Ovary (tissue), 10 donors: ENCODE measurements at regions of chr19 and their contacts with region 1.

Region 1: GRCh38 chr19:56973713-56974555 is 133.4 kb upstream of the PEG3 start:
- DNase-seq: peak; percentile 82 to 89 (median 86)
- H3K4me3 ChIP-seq: no peak overlapping the region
- H3K27ac ChIP-seq: peak overlapping the region in 1 of 2 donors; percentile 96
- H3K4me1 ChIP-seq: peaks cover 50% of the 10 kb centered on the region
- H3K27me3 ChIP-seq: no peaks in the 10 kb centered on the region
- CTCF ChIP-seq: no peak
- EP300 ChIP-seq: no peak
- POLR2A ChIP-seq: no peak

Region 2: GRCh38 chr19:56838909-56839651 is 134.9 kb before region 1 on chr19:
- intact Hi-C with region 1: loop called in 1 of 4 experiments (anchors 10 kb)
- DNase-seq: peak; percentile 91 to 99 (median 95)
- H3K4me3 ChIP-seq: peak overlapping the region; percentile 56
- H3K27ac ChIP-seq: peak overlapping the region in 1 of 2 donors; percentile 90
- H3K4me1 ChIP-seq: peaks cover 2% of the 10 kb centered on the region
- H3K27me3 ChIP-seq: no peaks in the 10 kb centered on the region
- CTCF ChIP-seq: no peak
- EP300 ChIP-seq: no peak
- POLR2A ChIP-seq: no peak

Region 3: DNA sequence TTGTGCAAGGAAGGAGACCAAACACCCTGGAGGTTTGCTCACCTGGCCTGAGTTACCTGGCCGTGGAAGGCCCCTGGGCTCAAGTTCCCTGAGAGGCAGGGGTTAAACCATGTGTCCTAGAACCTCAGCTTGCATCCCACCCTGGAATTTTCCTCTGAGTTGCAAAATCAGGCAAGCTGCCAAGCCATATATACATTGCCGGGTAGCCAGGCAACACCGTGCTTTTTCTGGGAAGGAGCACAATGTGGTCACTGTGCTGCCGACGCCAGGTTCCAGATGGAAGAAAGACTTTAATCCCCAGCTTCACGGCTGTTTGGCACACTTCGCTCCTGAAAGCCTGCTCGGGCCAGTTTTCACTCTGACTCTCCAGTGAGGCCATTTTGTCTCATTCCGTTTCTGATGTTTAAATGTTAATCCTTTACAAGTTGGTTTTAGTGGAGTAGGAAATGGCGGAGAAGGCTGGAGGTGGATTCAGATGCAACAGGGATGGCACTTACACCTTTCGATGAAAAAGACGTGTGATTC is 73.3 kb before region 1 on chr19:
- intact Hi-C with region 1: no loop called
- DNase-seq: no peak
- H3K4me3 ChIP-seq: no peak overlapping the region
- H3K27ac ChIP-seq: no peak overlapping the region
- H3K4me1 ChIP-seq: peaks cover 1% of the 10 kb centered on the region
- H3K27me3 ChIP-seq: no peaks in the 10 kb centered on the region
- CTCF ChIP-seq: no peak
- EP300 ChIP-seq: no peak
- POLR2A ChIP-seq: no peak

Region 4: GRCh38 chr19:57057036-57057686 is 83.2 kb after region 1 on chr19:
- intact Hi-C with region 1: loop called in 2 of 4 experiments (anchors 10 kb)
- DNase-seq: peak; percentile 91 to 98 (median 94)
- H3K4me3 ChIP-seq: peak overlapping the region; percentile 22
- H3K27ac ChIP-seq: peak overlapping the region; percentile 52 to 79
- H3K4me1 ChIP-seq: peaks cover 12% of the 10 kb centered on the region
- H3K27me3 ChIP-seq: no peaks in the 10 kb centered on the region
- CTCF ChIP-seq: no peak
- EP300 ChIP-seq: peak; percentile 39
- POLR2A ChIP-seq: no peak

Region 5: DNA sequence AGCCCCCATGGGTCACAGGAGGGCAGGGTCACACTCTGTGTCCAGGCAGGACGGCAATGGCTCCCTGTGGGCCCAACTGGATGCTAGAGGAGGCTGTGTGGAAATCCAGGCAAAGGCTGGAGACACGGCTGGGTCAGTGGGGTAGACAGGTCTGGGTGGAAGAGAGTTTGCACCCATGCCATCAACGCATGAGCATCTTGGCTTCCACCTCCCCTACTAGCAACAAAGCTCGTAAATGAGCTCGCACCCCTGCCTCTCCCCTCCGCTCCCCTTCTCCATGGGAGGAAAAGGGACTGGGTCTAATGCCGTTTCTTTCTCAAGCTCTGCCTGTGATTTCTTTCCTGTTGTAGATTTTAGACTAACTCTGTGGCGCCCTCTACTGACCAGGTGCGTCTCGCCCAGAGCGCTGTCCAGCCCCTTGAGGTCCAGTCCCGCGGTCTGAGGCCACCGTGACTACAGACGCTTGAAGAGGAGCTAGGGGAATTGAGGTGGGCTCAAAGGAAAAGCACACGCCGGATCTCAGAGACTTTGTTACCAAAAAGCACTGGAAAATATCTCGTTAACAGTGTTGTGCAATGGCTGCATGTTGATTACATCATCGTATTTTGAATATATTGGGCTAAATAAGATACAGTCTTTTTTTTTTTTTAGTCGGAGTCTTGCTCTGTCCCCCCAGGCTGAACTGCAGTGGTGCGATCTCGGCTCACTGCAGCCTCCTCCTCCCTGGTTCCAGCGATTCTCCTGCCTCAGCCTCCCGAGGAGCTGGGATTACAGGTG is 95.2 kb after region 1 on chr19:
- intact Hi-C with region 1: loop called in 1 of 4 experiments (anchors 10 kb)
- DNase-seq: peak; percentile 86 to 91 (median 88)
- H3K4me3 ChIP-seq: no peak overlapping the region
- H3K27ac ChIP-seq: peak overlapping the region in 1 of 2 donors; percentile 48
- H3K4me1 ChIP-seq: peaks cover 4% of the 10 kb centered on the region
- H3K27me3 ChIP-seq: no peaks in the 10 kb centered on the region
- CTCF ChIP-seq: peak; percentile 53 to 89 (median 83)
- EP300 ChIP-seq: no peak
- POLR2A ChIP-seq: no peak